ENCODE measurements at regions of chr5 and their contacts with region 1.

Region 1: DNA sequence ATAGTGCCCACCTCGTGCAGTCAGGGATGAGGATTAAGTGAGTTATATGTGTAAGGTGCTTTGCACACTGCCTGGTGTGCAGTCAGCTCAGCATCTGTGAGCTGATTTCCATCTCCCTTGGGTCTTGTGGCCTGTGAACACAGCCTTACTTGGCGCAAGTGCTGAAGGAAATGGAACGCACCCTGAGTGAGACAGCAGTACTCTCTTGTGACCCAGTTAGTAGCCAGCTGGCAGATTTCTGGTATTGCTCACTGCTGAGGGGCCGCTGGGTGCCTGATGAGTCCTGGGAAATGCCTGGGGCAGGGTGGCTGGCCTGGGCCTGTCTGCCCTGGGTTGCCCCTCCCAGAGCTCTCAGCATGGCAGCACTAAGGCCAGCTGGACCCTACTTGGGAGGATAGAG is 90.9 kb upstream of the BOD1 start:
- DNase-seq: peak; percentile 64
- ATAC-seq: peak; percentile 86 to 89

Region 2: GRCh38 chr5:173757403-173758209 is 50.2 kb after region 1 on chr5:
- intact Hi-C with region 1: loop called in 1 of 2 experiments (anchors 5 kb)
- DNase-seq: no peak
- ATAC-seq: no peak

Measured in left cardiac atrium (tissue), 4 donors.